Heart right ventricle (tissue), 16 donors: ENCODE measurements at regions of chr2 and their contacts with region 1.

Region 1: DNA sequence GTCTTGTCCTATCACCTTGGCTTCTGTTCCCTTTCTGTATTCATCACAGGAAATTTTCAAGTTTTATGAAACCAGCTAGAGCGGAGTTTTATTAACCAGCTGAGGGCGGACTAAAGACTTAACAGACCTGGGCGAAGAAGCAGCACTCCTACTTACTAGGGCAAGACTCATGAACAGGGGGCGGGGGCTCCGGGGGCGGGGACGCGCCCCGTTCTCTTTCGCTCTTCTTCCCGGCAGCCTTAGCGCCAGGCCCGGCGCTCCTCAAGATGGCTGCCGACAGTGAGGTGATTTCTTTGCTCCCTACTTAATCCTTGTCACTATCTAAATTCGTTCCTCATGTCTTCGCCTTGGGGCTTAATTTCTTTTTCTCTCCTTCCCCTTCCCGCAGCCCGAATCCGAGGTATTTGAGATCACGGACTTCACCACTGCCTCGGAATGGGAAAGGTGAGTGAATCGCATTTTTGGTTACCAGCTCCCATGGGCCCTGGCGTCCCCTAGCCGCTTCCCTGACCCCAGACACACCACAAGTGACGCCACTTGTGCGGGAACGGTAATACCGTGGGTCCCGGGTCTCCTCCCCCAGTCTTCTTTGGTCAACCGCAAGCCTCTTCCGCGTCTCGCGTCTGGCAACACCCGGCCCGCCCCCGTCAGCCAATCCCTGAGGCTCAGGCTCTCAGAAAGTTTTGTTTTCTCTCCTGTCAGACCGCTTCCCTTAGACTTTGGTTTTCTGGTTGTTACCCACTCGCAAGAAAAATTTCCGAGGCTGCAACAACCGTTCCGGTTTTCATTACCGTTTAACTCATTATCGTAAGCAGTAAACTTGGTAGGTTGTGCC is at the start of gene RAB3GAP1:
- DNase-seq: peak; percentile 70 to 78
- ATAC-seq: peak; percentile 93 to 96 (median 94)
- H3K4me3 ChIP-seq: peak within 1 kb of the TSS; percentile 50 to 92 (median 82)
- H3K27ac ChIP-seq: peak within 1 kb of the TSS; percentile 80 to 97 (median 93)
- H3K4me1 ChIP-seq: peaks cover 3 to 49% (median 33%) of the 10 kb centered on the region in 9 donors
- H3K27me3 ChIP-seq: no peaks in the 10 kb centered on the region
- CTCF ChIP-seq: no peak
- total RNA-seq, gene RAB3GAP1: 40.7 to 64.2 (median 53.8) TPM

Region 2: DNA sequence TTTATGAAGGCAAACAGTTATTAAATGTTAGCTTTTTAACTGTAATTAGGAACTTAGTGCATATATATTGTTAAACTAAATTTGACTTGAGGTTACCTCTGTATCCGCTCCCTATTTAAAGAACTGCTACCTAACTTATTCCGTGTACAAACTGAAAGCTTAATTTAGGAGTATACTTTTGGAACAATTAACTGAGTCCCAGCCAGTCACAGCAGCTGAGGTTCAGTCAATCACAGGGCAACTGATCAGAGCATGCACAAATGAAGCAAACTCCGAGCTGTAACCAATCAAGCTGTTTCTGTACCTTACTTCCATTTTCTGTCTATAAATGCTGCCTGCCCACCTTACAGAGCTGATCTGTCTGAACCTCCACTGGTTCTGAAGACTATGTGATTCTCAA is 61.1 kb after region 1 on chr2:
- intact Hi-C with region 1: loop called in 1 of 10 experiments (anchors 10 kb)
- DNase-seq: no peak
- ATAC-seq: no peak
- H3K4me3 ChIP-seq: no peak overlapping the region
- H3K27ac ChIP-seq: no peak overlapping the region
- H3K4me1 ChIP-seq: no peaks in the 10 kb centered on the region
- H3K27me3 ChIP-seq: no peaks in the 10 kb centered on the region
- CTCF ChIP-seq: no peak

Region 3: GRCh38 chr2:135144344-135144743 is 92.1 kb after region 1 on chr2:
- intact Hi-C with region 1: no loop called
- DNase-seq: no peak
- ATAC-seq: no peak
- H3K4me3 ChIP-seq: no peak overlapping the region
- H3K27ac ChIP-seq: no peak overlapping the region
- H3K4me1 ChIP-seq: peaks cover 0 to 7% (median 5%) of the 10 kb centered on the region in 9 donors
- H3K27me3 ChIP-seq: no peaks in the 10 kb centered on the region
- CTCF ChIP-seq: no peak

Region 4: DNA sequence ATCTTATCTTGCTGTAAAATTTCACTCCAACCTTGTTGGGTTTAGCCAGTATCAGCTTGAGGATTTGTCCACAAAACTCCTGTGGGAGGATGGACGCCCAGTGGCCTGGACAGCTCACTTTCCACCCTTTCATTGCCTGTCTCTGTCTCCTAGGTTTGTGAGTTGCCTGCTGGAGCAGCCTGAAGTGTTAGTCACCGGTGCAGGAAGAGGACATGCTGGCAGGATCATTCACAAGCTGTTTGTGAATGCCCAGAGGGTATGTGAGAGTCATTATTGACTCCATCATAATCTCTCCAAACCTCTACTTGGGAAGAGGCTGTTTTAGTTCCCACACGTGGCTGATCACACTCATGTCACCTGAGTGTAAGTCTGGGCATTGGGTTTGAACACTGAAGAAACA is 112.2 kb after region 1 on chr2:
- intact Hi-C with region 1: no loop called
- DNase-seq: no peak
- ATAC-seq: no peak
- H3K4me3 ChIP-seq: no peak overlapping the region
- H3K27ac ChIP-seq: no peak overlapping the region
- H3K4me1 ChIP-seq: no peaks in the 10 kb centered on the region
- H3K27me3 ChIP-seq: no peaks in the 10 kb centered on the region
- CTCF ChIP-seq: no peak